ENCODE measurements at regions of chr4 and their contacts with region 1.

Region 1: DNA sequence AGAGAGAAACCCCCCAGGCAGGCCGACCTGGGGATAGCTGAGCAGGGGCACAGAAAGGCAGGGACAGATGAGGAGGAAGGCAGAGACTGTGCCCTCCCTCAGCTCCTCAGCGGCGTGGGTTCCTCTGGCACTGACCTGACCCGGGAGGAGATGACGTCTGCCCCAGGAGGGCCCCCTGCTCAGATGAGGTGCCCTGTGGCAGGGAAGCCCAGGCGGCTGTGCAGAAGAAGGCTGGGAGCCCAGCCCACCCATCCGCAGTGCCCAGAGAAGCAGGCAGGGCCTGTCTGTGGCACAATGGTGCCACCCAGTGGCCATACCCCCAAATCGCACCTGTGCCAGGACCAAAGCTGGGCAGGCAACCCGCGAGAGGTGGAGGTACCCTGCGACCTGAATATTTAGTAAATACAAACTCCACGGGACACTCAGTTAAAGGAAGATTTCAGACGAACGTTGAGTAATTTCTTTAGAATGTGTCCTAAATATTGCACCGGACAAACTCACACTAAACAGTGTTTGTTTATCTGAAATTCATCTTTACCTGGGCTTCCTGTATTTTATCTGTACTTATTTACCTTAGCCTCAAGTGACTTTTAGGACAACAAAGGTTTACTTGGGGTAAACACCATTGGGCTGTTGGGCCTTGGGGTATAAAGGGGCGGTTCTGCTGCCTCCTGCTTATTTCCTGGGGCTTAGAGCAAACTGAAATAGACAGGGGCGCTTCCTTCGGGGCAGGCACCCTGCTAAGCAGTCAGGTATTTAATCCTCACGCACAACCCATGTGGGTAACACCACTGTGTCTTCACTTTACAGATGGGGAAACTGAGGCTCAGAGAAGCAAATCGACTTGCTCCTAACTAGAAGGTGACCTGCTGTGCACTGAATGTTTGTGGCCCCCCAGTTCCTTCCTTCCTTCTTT is 46.5 kb upstream of the HMX1 start:
- DNase-seq: no peak
- H3K4me3 ChIP-seq: no peak overlapping the region
- CTCF ChIP-seq: peak; percentile 89

Region 2: GRCh38 chr4:8607603-8608481 is 310.3 kb before region 1 on chr4:
- CTCF ChIA-PET with region 1: interaction called, 14 read pairs
- POLR2A ChIA-PET with region 1: no interaction called
- DNase-seq: no peak
- H3K4me3 ChIP-seq: no peak overlapping the region
- CTCF ChIP-seq: peak; percentile 97

Region 3: DNA sequence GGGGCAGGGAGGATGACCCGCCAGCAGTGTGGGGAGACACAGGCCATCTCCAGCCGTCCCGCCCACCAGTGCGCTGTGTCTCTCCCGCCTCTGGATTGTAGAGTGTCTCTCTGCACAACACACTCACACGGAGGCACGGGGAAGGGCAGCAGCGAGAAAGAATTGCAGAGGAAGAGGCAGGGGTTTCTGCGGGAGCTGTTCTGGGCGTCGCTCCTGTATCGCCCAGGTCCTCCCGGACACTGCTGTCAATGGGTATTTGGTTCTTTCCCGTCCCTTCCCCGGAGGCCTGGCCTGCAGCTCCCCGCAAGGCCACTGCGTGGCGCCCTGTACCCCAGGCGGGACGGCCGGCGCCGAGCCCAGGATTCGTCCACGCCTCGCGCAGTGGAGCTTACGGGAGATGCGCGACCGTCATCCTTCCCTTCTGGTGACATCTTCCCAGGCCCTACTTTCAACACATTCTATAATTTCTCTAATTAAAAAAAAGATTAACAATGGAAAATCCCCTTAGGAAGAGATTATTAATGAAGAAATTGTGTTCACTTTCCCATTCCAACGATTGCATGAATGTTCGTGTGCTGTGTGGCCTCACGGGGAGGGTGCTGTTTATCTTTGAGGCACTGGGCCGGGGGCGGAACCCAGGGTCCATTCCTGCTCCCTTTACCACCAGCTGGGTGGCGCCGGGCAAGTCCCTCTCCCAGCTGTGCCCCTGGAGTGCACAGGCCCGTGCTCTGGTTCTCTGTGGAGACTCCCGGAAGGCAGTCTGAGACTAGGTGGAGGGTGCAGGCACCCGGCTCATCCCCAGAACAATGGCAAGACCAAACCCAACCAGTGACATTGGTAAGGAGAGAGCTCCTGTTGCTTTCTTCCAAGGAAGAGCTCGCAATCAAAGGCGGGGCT is 229.8 kb before region 1 on chr4:
- CTCF ChIA-PET with region 1: interaction called, 21 read pairs
- POLR2A ChIA-PET with region 1: no interaction called
- DNase-seq: no peak
- H3K4me3 ChIP-seq: no peak overlapping the region
- CTCF ChIP-seq: peak; percentile 83

Region 4: GRCh38 chr4:8871417-8872401 is 46.4 kb before region 1 on chr4 and contains the start of gene HMX1:
- CTCF ChIA-PET with region 1: no interaction called
- POLR2A ChIA-PET with region 1: no interaction called
- DNase-seq: no peak
- H3K4me3 ChIP-seq: no peak within 1 kb of the TSS
- CTCF ChIP-seq: no peak